CD8-positive, alpha-beta T cell (primary cell): ENCODE measurements at regions of chrX and their contacts with region 1.

Region 1: DNA sequence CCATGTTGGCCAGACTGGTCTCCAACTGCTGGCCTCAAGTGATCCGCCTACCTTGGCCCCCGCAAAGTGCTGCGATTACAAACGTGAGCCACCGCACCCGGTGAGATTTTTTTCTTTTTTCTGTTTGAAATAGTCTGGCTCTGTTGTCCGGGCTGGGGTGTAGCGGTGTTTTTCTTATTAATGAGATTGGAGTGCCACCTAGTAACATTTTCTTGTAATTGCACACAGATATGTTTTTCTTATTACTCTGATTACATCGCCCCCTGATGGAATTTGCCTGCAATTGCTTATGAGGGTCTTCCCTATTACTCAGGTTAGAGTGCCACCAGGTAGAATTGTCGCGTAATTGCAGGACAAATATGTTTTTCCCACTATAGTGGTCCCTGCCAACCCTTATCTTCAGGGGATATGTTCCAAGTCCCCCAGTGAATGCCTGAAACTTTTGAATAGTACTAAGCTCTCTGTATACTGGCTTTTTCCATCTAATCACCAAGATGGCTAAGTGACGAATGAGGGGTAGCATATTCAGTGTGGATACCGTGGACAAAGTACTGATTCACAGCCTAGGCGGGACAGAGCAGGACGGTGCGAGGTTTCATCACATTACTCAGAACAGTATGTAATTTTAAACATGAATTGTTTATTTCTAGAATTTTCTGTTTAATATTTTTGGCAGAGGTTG is 8.6 kb upstream of the PDHA1 start:
- DNase-seq: peak in 3 of 9 experiments; percentile 21 to 53 (median 39)
- ATAC-seq: peak; percentile 21
- H3K4me3 ChIP-seq: no peak overlapping the region
- H3K4me3 Mint-ChIP-seq: no peak overlapping the region
- H3K27ac ChIP-seq: no peak overlapping the region
- H3K27ac Mint-ChIP-seq: no peak overlapping the region
- H3K4me1 ChIP-seq: no peaks in the 10 kb centered on the region
- H3K4me1 Mint-ChIP-seq: no peaks in the 10 kb centered on the region
- H3K27me3 ChIP-seq: no peaks in the 10 kb centered on the region
- H3K27me3 Mint-ChIP-seq: no peaks in the 10 kb centered on the region
- CTCF ChIP-seq: no peak

Region 2: DNA sequence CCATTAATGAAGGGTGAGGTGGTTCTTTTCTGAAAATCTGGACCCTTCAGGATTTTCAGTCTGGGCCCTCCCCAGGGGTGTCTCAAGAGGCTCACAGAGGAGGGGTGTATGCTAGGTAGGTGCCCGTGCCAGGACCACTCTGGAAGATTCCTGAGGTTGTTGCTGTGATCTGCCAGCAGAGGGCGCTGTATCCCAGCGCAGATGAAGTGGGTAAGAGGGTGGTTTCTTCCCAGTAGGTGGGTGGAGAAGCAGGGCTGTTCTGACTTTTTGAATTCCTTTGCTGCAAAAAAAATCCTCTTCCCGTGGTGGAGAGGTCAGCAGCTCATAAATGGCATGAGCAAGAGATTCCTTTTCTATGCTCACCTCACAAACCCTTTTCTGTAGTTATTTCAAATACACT is 1546.6 kb before region 1 on chrX:
- CTCF ChIA-PET with region 1: no interaction called
- POLR2A ChIA-PET with region 1: no interaction called
- intact Hi-C with region 1: loop called in 1 of 2 experiments (anchors 2 kb)
- DNase-seq: peak in 8 of 9 experiments; percentile 1 to 63 (median 42)
- ATAC-seq: peak; percentile 54
- H3K4me3 ChIP-seq: no peak overlapping the region
- H3K4me3 Mint-ChIP-seq: no peak overlapping the region
- H3K27ac ChIP-seq: no peak overlapping the region
- H3K27ac Mint-ChIP-seq: no peak overlapping the region
- H3K4me1 ChIP-seq: no peaks in the 10 kb centered on the region
- H3K4me1 Mint-ChIP-seq: peaks cover 9% of the 10 kb centered on the region
- H3K27me3 ChIP-seq: no peaks in the 10 kb centered on the region
- H3K27me3 Mint-ChIP-seq: no peaks in the 10 kb centered on the region
- CTCF ChIP-seq: peak; percentile 57

Region 3: GRCh38 chrX:18931972-18932371 is 403.1 kb before region 1 on chrX:
- CTCF ChIA-PET with region 1: interaction called, 3 read pairs
- POLR2A ChIA-PET with region 1: no interaction called
- intact Hi-C with region 1: loop called in 1 of 2 experiments (anchors 5 kb)
- DNase-seq: peak in 2 of 9 experiments; percentile 10 to 14
- ATAC-seq: no peak
- H3K4me3 ChIP-seq: no peak overlapping the region
- H3K4me3 Mint-ChIP-seq: no peak overlapping the region
- H3K27ac ChIP-seq: no peak overlapping the region
- H3K27ac Mint-ChIP-seq: no peak overlapping the region
- H3K4me1 ChIP-seq: no peaks in the 10 kb centered on the region
- H3K4me1 Mint-ChIP-seq: no peaks in the 10 kb centered on the region
- H3K27me3 ChIP-seq: no peaks in the 10 kb centered on the region
- H3K27me3 Mint-ChIP-seq: no peaks in the 10 kb centered on the region
- CTCF ChIP-seq: no peak

Region 4: DNA sequence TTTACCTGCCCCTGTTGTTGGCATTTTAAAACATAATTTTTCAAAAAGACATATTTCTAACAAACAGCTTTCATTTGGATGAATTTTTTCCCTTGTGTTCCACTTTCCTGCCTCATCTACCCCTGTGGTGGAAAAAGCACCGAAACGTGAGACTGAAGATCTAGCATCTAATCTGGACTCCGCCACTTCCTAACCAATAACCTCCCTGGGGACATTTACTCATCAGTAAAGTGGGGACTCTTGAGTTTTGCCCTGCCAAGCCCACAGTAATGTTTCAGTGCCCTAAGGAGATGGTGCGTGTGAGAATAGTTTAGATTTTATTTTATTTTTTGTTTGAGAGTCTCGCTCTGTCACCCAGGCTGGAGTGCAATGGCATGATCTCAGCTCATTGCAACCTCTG is 269.6 kb before region 1 on chrX:
- CTCF ChIA-PET with region 1: no interaction called
- POLR2A ChIA-PET with region 1: no interaction called
- intact Hi-C with region 1: no loop called
- DNase-seq: no peak
- ATAC-seq: no peak
- H3K4me3 ChIP-seq: no peak overlapping the region
- H3K4me3 Mint-ChIP-seq: no peak overlapping the region
- H3K27ac ChIP-seq: no peak overlapping the region
- H3K27ac Mint-ChIP-seq: no peak overlapping the region
- H3K4me1 ChIP-seq: no peaks in the 10 kb centered on the region
- H3K4me1 Mint-ChIP-seq: no peaks in the 10 kb centered on the region
- H3K27me3 ChIP-seq: no peaks in the 10 kb centered on the region
- H3K27me3 Mint-ChIP-seq: no peaks in the 10 kb centered on the region
- CTCF ChIP-seq: no peak

Region 5: DNA sequence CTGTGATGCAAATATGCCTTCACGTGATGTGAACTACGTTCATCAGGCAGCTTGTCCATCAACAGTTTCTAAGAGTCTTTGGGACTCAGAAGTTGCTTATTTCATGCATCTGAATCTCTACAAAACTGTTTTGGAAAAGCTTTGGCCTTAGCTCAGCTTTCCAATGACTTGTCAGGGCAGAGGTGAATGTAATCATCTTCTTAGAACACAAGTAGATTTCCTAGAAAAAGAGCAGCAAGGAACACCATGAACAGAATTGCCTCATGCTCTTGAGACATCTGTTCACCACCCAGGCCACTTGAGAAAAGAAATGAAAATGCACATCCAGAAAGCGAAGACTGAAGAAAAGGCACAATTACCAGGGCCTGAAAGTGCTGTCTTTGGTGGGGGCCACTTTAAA is 97.2 kb before region 1 on chrX:
- CTCF ChIA-PET with region 1: no interaction called
- POLR2A ChIA-PET with region 1: no interaction called
- intact Hi-C with region 1: no loop called
- DNase-seq: no peak
- ATAC-seq: no peak
- H3K4me3 ChIP-seq: no peak overlapping the region
- H3K4me3 Mint-ChIP-seq: no peak overlapping the region
- H3K27ac ChIP-seq: no peak overlapping the region
- H3K27ac Mint-ChIP-seq: no peak overlapping the region
- H3K4me1 ChIP-seq: no peaks in the 10 kb centered on the region
- H3K4me1 Mint-ChIP-seq: no peaks in the 10 kb centered on the region
- H3K27me3 ChIP-seq: no peaks in the 10 kb centered on the region
- H3K27me3 Mint-ChIP-seq: peaks cover 8% of the 10 kb centered on the region
- CTCF ChIP-seq: no peak

Region 6: GRCh38 chrX:19616959-19617358 is 281.9 kb after region 1 on chrX:
- CTCF ChIA-PET with region 1: no interaction called
- POLR2A ChIA-PET with region 1: no interaction called
- intact Hi-C with region 1: no loop called
- DNase-seq: no peak
- ATAC-seq: no peak
- H3K4me3 ChIP-seq: no peak overlapping the region
- H3K4me3 Mint-ChIP-seq: no peak overlapping the region
- H3K27ac ChIP-seq: no peak overlapping the region
- H3K27ac Mint-ChIP-seq: peak overlapping the region; percentile 74
- H3K4me1 ChIP-seq: no peaks in the 10 kb centered on the region
- H3K4me1 Mint-ChIP-seq: peaks cover 27% of the 10 kb centered on the region
- H3K27me3 ChIP-seq: no peaks in the 10 kb centered on the region
- H3K27me3 Mint-ChIP-seq: no peaks in the 10 kb centered on the region
- CTCF ChIP-seq: no peak